Activated T-helper 1 cell treated with anti-CD3 and anti-CD28 coated beads, Interleukin-12 subunit alpha, Interleukin-12 subunit beta, Interleukin-2, Interleukin-4 antibody, amounts not matched to agents 30 ng/mL and 10 ng/mL and 1 ng/mL, durations not matched to agents 14 hours and 24 hours and 36 hours (primary cell): ENCODE measurements at regions of chr5 and their contacts with region 1.

Region 1: GRCh38 chr5:96067894-96068614 is 106.4 kb upstream of the ELL2 start:
- DNase-seq: no peak
- H3K4me3 Mint-ChIP-seq: no peak overlapping the region
- H3K27ac Mint-ChIP-seq: peak overlapping the region; percentile 79
- H3K4me1 Mint-ChIP-seq: peaks cover 68% of the 10 kb centered on the region
- H3K27me3 Mint-ChIP-seq: no peaks in the 10 kb centered on the region

Region 2: GRCh38 chr5:95996904-95997723 is 70.9 kb before region 1 on chr5:
- intact Hi-C with region 1: loop called (anchors 5 kb)
- DNase-seq: no peak
- H3K4me3 Mint-ChIP-seq: no peak overlapping the region
- H3K27ac Mint-ChIP-seq: no peak overlapping the region
- H3K4me1 Mint-ChIP-seq: peaks cover 7% of the 10 kb centered on the region
- H3K27me3 Mint-ChIP-seq: peaks cover 11% of the 10 kb centered on the region

Region 3: DNA sequence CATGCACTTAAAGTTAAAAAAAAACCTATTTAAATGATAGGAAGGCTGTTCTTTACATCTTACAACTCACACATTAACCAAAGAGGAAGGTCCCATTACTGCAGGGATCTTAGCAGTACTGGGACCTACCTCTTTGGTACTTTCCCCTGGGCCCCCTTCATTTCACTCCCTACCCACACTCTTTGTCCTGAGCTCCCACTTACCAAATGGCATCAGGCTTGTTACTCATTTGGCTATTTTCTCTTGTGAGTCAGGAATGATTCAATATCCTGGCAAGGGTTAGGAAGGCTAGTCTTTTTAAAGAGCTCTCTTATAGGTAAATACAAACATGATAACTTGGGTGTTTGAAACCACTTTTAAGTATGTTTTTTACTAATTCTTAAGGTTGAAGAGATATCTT is 11.0 kb after region 1 on chr5:
- intact Hi-C with region 1: loop called (anchors 1 kb)
- DNase-seq: no peak
- H3K4me3 Mint-ChIP-seq: no peak overlapping the region
- H3K27ac Mint-ChIP-seq: peak overlapping the region; percentile 73
- H3K4me1 Mint-ChIP-seq: peaks cover 53% of the 10 kb centered on the region
- H3K27me3 Mint-ChIP-seq: no peaks in the 10 kb centered on the region

Region 4: GRCh38 chr5:96220610-96221390 is 152.7 kb after region 1 on chr5:
- intact Hi-C with region 1: loop called (anchors 2 kb)
- DNase-seq: no peak
- H3K4me3 Mint-ChIP-seq: no peak overlapping the region
- H3K27ac Mint-ChIP-seq: peak overlapping the region; percentile 81
- H3K4me1 Mint-ChIP-seq: peaks cover 13% of the 10 kb centered on the region
- H3K27me3 Mint-ChIP-seq: peaks cover 1% of the 10 kb centered on the region